CD8-positive, alpha-beta memory T cell (primary cell): ENCODE measurements at regions of chr19 and their contacts with region 1.

Region 1: GRCh38 chr19:55653758-55654539 is 886 bp upstream of the U2AF2 start:
- DNase-seq: peak; percentile 99 to 100 (median 100)
- H3K4me3 ChIP-seq: peak overlapping the region; percentile 89
- H3K4me3 Mint-ChIP-seq: peak overlapping the region; percentile 90 to 97 (median 95)
- H3K27ac ChIP-seq: peak overlapping the region; percentile 91
- H3K27ac Mint-ChIP-seq: peak overlapping the region; percentile 96 to 99 (median 98)
- H3K4me1 ChIP-seq: peaks cover 38% of the 10 kb centered on the region
- H3K4me1 Mint-ChIP-seq: peaks cover 31 to 48% (median 32%) of the 10 kb centered on the region in 3 donors
- H3K27me3 ChIP-seq: no peaks in the 10 kb centered on the region
- H3K27me3 Mint-ChIP-seq: peaks cover 0 to 7% of the 10 kb centered on the region in 2 donors

Region 2: DNA sequence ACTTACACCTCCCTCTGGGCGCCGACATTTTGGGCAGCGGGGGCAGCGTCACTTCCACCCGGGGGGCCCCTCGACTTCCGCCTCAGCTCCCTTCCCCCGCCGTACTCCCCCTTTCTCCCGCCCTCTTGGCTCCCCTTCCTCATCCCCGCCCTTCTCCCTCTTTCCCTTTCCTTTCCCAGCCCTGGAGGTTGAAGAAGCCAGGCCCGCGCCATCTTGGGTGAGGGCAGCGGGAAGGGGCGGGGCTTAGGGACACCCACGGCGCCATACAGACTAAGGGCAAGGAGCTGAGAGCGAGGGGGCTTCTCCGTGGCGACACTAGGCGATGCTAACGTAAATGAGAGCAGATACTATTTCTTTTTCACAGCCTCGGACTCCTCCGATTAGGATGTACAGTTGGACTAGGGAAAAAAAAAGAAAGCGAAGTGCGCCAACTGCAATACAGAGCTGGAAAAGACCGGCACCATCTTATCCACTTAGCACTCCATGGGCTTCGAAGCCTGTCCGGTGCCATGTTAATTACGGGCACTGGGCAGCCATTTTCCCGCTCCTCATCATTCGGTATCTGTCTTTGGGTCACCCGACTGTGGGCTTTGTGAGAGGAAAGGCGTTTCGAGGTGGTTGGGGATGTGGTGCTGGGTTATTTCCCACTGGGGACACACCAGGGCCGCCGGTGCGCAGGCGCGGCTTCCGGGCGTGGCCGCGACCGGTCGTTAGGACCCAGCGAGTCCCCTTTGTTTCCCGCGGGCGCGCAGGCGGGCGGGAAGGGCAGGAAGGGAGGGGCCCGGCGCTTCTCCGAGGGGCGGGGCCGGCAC is 54.3 kb before region 1 on chr19 and contains the start of gene FIZ1:
- CTCF ChIA-PET with region 1: interaction called, 4 read pairs
- POLR2A ChIA-PET with region 1: interaction called, 19 read pairs
- DNase-seq: peak; percentile 92 to 98 (median 96)
- H3K4me3 ChIP-seq: peak within 1 kb of the TSS; percentile 99
- H3K4me3 Mint-ChIP-seq: peak within 1 kb of the TSS; percentile 95 to 100 (median 98)
- H3K27ac ChIP-seq: peak within 1 kb of the TSS; percentile 91
- H3K27ac Mint-ChIP-seq: peak within 1 kb of the TSS; percentile 91 to 100 (median 98)
- H3K4me1 ChIP-seq: peaks cover 20% of the 10 kb centered on the region
- H3K4me1 Mint-ChIP-seq: peaks cover 21 to 31% (median 28%) of the 10 kb centered on the region in 3 donors
- H3K27me3 ChIP-seq: no peaks in the 10 kb centered on the region
- H3K27me3 Mint-ChIP-seq: peaks cover 0 to 1% of the 10 kb centered on the region in 2 donors
- total RNA-seq, gene FIZ1: 23.9 to 25.8 TPM

Region 3: GRCh38 chr19:55643348-55644176 is 10.4 kb before region 1 on chr19 and contains the start of gene ZNF581:
- CTCF ChIA-PET with region 1: interaction called, 9 read pairs
- POLR2A ChIA-PET with region 1: interaction called, 23 read pairs
- DNase-seq: peak; percentile 65 to 84 (median 72)
- H3K4me3 ChIP-seq: peak within 1 kb of the TSS; percentile 95
- H3K4me3 Mint-ChIP-seq: peak within 1 kb of the TSS; percentile 84 to 98 (median 94)
- H3K27ac ChIP-seq: peak within 1 kb of the TSS; percentile 72
- H3K27ac Mint-ChIP-seq: peak within 1 kb of the TSS; percentile 85 to 98 (median 96)
- H3K4me1 ChIP-seq: peaks cover 34% of the 10 kb centered on the region
- H3K4me1 Mint-ChIP-seq: peaks cover 44 to 63% (median 58%) of the 10 kb centered on the region in 3 donors
- H3K27me3 ChIP-seq: no peaks in the 10 kb centered on the region
- H3K27me3 Mint-ChIP-seq: no peaks in the 10 kb centered on the region
- total RNA-seq, gene ZNF581: 32.8 to 34.4 TPM

Region 4: GRCh38 chr19:55670280-55671053 is 16.5 kb after region 1 on chr19:
- CTCF ChIA-PET with region 1: interaction called, 12 read pairs
- POLR2A ChIA-PET with region 1: interaction called, 4 read pairs
- DNase-seq: peak in 1 of 5 donors; percentile 58
- H3K4me3 ChIP-seq: no peak overlapping the region
- H3K4me3 Mint-ChIP-seq: no peak overlapping the region
- H3K27ac ChIP-seq: no peak overlapping the region
- H3K27ac Mint-ChIP-seq: peak overlapping the region in 5 of 8 donors; percentile 55 to 90 (median 74)
- H3K4me1 ChIP-seq: peaks cover 20% of the 10 kb centered on the region
- H3K4me1 Mint-ChIP-seq: peaks cover 17 to 69% (median 21%) of the 10 kb centered on the region in 3 donors
- H3K27me3 ChIP-seq: no peaks in the 10 kb centered on the region
- H3K27me3 Mint-ChIP-seq: peaks cover 0 to 3% of the 10 kb centered on the region in 2 donors